Activated B cell treated with CpG ODN at 0.5 μM for 24 hours (primary cell): ENCODE measurements at regions of chr4 and their contacts with region 1.

Region 1: GRCh38 chr4:53196882-53197771 is 168.7 kb downstream of the SCFD2 start:
- DNase-seq: no peak
- ATAC-seq: no peak
- H3K4me3 Mint-ChIP-seq: no peak overlapping the region
- H3K27ac Mint-ChIP-seq: no peak overlapping the region
- H3K4me1 Mint-ChIP-seq: peaks cover under 1% of the 10 kb centered on the region
- H3K27me3 Mint-ChIP-seq: no peaks in the 10 kb centered on the region
- CTCF ChIP-seq: no peak

Region 2: DNA sequence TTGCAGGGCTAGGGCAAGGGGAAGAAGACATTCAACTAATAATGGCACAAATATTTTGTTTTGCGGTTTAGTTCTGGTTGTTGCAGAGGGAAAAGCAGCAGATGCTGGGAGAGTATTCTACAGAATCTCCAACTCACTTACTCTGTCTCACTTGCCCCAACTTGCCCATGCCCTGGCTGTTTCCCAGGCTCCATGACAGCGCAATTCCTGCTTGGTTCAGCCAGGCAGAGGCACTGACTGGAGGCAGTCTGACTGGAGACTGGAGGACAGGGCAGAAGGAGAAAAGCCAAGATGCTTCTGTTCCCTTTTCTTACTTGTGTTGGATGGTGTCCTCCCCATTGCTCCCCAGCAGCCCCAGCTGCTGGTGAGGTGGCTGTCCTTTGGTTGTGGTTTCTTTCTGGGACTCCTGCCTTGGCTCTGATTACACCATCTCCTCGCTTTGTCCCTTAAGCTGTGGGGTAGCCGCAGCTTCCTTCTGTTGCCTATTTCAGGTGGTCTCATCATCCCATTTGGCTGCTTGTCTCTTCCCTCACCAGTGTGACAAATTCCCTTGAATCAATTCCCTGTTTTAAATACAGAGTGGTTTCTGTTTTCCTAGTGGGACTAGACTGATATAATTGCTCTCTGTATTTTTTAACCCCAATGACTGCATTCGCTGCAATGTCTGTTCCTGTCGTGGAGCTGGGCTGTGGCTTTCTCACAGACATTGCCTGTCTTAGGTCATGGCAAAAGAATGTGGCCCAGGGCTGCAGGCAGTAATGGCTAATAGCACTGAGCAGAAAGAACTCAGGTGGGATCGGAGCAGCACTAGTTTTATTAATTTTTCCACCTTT is 359.2 kb before region 1 on chr4:
- CTCF ChIA-PET with region 1: no interaction called
- POLR2A ChIA-PET with region 1: no interaction called
- intact Hi-C with region 1: no loop called
- DNase-seq: no peak
- ATAC-seq: no peak
- H3K4me3 Mint-ChIP-seq: no peak overlapping the region
- H3K27ac Mint-ChIP-seq: no peak overlapping the region
- H3K4me1 Mint-ChIP-seq: peaks cover 5% of the 10 kb centered on the region
- H3K27me3 Mint-ChIP-seq: peaks cover 5% of the 10 kb centered on the region
- CTCF ChIP-seq: no peak

Region 3: DNA sequence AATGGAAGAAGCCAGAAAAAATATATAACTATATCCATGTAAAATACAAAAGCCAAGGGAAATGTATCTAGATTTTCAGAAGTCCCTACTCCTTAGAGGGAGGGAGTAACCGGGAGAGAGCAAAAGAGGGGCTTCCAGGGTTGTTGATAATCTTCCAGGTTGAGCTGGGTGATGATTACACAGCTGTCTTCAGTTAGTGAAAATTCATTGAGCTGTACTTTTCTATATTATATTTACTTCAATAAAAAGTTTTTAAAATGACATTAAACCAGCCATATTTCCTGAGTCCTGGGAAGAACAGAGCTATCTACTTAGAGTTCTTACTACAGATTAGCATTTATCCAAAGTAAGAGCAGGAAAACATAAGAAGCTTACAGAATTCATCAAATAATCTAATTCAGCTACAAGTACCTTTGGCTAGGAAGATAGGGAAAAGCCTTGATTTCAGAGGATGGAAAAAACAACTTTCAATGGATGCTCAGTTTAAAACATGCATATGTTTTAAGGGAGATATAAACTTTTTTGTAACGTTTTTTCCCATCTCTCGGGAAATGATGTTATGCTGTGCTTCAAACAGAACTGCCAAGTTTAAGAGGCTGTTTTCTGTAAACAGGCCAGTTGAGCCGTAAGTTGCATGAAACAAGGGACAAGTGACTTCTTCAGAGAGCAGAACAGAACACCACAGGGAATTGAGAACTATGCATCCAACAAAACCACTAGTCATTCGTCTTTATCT is 35.9 kb before region 1 on chr4:
- CTCF ChIA-PET with region 1: no interaction called
- POLR2A ChIA-PET with region 1: no interaction called
- intact Hi-C with region 1: no loop called
- DNase-seq: no peak
- ATAC-seq: no peak
- H3K4me3 Mint-ChIP-seq: no peak overlapping the region
- H3K27ac Mint-ChIP-seq: no peak overlapping the region
- H3K4me1 Mint-ChIP-seq: no peaks in the 10 kb centered on the region
- H3K27me3 Mint-ChIP-seq: no peaks in the 10 kb centered on the region
- CTCF ChIP-seq: no peak

Region 4: DNA sequence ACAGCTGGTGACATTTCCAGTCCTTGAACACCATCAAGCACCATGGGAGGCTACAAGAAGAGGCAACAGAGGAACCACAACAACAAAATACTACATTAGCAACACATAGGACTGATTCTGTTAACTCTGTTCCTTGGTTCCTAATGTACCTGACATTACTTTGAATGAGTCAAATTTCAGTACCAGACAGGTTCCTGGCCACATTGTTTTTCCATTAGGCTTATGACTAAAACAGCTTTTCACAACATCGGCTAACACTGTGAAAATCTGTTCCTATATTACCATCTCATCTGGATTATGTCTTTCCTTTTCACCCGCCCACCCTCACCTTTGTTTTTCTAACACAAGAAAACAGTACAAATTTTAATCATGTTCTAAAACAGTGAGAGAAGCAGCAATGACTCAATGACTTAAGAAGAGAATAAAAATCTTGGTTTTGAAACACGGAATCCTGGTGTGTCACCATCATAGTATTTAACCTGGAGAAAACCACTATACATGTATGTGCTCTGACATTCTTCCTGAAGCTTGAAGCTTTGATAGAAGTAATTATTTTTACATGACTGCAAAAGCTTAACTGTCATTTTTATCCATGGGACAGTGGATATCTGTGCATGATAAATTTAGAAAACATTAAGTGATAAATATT is 24.8 kb after region 1 on chr4:
- CTCF ChIA-PET with region 1: no interaction called
- POLR2A ChIA-PET with region 1: no interaction called
- intact Hi-C with region 1: no loop called
- DNase-seq: no peak
- ATAC-seq: no peak
- H3K4me3 Mint-ChIP-seq: no peak overlapping the region
- H3K27ac Mint-ChIP-seq: no peak overlapping the region
- H3K4me1 Mint-ChIP-seq: no peaks in the 10 kb centered on the region
- H3K27me3 Mint-ChIP-seq: no peaks in the 10 kb centered on the region
- CTCF ChIP-seq: no peak

Region 5: DNA sequence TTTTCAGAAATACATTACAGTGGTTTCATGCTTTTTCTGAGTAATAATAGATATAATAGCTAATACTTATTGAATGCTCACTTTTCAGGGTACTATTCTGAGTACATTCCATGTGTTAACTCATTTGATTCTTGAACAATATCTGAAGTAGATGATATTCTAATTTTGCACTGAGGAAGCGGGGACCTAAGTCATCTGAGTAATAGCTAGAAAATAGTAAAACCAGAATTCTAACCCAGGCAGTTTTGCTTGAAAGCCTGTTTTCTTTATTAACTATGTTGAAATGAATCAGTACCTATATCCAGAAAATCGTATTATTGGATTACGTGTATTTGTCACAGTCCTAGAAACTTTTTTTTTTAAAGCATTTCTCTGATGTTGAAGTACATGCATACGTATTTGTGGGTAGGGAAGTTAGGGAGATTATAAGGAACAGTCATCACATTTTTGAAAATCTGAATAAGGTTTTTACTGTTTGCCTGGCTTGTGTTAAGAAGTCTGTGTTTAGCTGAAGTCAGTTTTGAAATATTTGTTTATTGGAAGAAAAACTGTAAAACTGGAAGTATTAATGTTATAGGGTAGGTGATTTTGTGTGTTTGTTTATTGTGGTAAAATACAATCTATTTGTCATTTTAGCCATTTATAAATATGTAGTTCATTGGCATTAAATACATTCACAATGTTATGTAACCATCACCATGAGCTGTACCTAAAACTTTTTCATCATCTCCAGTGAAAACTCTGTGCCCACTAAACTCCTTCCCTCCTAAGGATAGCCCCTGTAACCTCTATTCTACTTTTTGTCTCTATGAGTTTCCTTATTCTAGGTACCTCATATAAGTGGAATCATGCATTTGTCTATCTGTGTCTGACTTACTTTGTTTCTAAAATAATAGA is 235.6 kb after region 1 on chr4:
- CTCF ChIA-PET with region 1: no interaction called
- POLR2A ChIA-PET with region 1: no interaction called
- intact Hi-C with region 1: loop called (anchors 10 kb)
- DNase-seq: no peak
- ATAC-seq: no peak
- H3K4me3 Mint-ChIP-seq: no peak overlapping the region
- H3K27ac Mint-ChIP-seq: no peak overlapping the region
- H3K4me1 Mint-ChIP-seq: no peaks in the 10 kb centered on the region
- H3K27me3 Mint-ChIP-seq: no peaks in the 10 kb centered on the region
- CTCF ChIP-seq: no peak

Region 6: GRCh38 chr4:53702334-53703266 is 505.5 kb after region 1 on chr4:
- CTCF ChIA-PET with region 1: no interaction called
- POLR2A ChIA-PET with region 1: interaction called, 5 read pairs
- intact Hi-C with region 1: loop called (anchors 5 kb)
- DNase-seq: peak; percentile 25
- ATAC-seq: peak; percentile 64
- H3K4me3 Mint-ChIP-seq: peak overlapping the region; percentile 79
- H3K27ac Mint-ChIP-seq: peak overlapping the region; percentile 54
- H3K4me1 Mint-ChIP-seq: peaks cover 61% of the 10 kb centered on the region
- H3K27me3 Mint-ChIP-seq: no peaks in the 10 kb centered on the region
- CTCF ChIP-seq: no peak

Region 7: DNA sequence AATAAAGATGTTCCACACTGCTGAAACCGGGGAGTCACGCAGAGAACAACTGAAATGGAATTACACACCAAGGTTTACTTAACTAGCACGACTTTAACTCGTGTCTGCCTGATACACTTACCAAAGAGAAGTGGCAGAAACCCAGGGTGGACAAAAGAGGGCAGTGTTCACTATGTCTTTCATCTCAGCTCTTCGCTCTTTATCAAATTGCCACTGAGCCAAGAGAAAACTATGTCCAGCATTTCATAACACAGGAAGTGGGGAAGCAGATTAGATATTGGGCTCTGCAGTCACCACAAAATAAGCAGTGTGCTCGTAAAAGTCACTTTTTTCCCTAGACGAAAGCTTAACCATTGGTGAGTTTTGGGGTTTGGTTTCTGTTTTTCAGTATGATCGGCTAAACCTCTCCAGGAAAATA is 711.5 kb after region 1 on chr4:
- CTCF ChIA-PET with region 1: no interaction called
- POLR2A ChIA-PET with region 1: no interaction called
- intact Hi-C with region 1: loop called (anchors 1 kb)
- DNase-seq: no peak
- ATAC-seq: no peak
- H3K4me3 Mint-ChIP-seq: no peak overlapping the region
- H3K27ac Mint-ChIP-seq: no peak overlapping the region
- H3K4me1 Mint-ChIP-seq: peaks cover 13% of the 10 kb centered on the region
- H3K27me3 Mint-ChIP-seq: peaks cover 32% of the 10 kb centered on the region
- CTCF ChIP-seq: peak; percentile 36

Region 8: GRCh38 chr4:54217642-54218495 is 1020.7 kb after region 1 on chr4:
- CTCF ChIA-PET with region 1: interaction called, 5 read pairs
- POLR2A ChIA-PET with region 1: no interaction called
- intact Hi-C with region 1: loop called (anchors 1 kb)
- DNase-seq: peak; percentile 27
- ATAC-seq: peak; percentile 66
- H3K4me3 Mint-ChIP-seq: peak overlapping the region; percentile 16
- H3K27ac Mint-ChIP-seq: no peak overlapping the region
- H3K4me1 Mint-ChIP-seq: peaks cover 4% of the 10 kb centered on the region
- H3K27me3 Mint-ChIP-seq: peaks cover 23% of the 10 kb centered on the region
- CTCF ChIP-seq: no peak